Heart right ventricle (tissue), 16 donors: ENCODE measurements at regions of chr13 and their contacts with region 1.

Region 1: DNA sequence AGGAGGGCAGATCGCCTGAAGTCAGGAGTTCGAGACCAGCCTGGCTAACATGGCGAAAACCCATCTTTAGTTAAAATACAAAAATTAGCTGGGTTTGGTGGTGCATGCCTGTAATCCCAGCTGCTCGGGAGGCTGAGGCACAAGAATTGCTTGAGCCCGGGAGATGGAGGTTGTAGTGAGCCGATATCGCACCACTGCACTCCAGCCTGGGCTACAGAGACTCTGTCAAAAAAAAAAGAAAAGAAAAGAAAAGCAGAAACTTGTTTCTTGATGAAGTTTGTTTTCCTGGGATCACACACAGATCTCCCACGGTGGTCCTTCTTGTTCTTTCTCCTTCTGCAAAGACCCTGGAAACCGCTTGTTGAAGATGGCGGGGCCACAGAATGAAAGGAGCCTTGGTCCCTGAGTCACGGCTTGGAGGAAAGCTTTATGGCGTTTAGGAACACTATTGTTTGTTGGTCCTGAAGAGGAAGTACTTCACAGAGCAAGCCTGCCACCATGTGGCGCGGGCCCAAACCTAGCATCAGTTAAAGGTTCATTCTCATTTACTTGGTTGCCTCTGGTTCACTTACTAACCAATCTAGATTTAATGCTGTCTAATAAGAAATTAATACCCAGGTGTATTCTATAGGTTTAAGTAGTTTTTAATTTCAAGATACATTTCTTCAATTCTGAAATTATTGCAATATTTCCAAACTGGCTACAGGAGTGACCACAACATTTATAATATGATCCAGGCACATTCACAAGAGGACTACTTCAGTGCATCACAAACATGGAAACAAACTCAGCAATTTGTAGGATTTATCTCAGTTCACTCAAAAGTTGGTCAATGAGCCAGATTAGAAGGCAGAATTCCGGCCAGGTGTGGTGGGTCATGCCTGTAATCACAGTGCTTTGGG is 21.3 kb upstream of the ARL11 start:
- DNase-seq: peak; percentile 85 to 88
- ATAC-seq: peak; percentile 93 to 99 (median 97)
- H3K4me3 ChIP-seq: peak overlapping the region in 8 of 10 donors; percentile 18 to 52 (median 42)
- H3K27ac ChIP-seq: peak overlapping the region in 5 of 10 donors; percentile 34 to 53 (median 45)
- H3K4me1 ChIP-seq: peaks cover 0 to 18% (median 0%) of the 10 kb centered on the region in 9 donors
- H3K27me3 ChIP-seq: no peaks in the 10 kb centered on the region
- CTCF ChIP-seq: peak; percentile 68 to 93 (median 84)

Region 2: GRCh38 chr13:49530457-49530856 is 76.5 kb before region 1 on chr13:
- intact Hi-C with region 1: loop called in 1 of 10 experiments (anchors 10 kb)
- DNase-seq: no peak
- ATAC-seq: peak in 2 of 8 donors; percentile 22 to 29
- H3K4me3 ChIP-seq: no peak overlapping the region
- H3K27ac ChIP-seq: peak overlapping the region in 2 of 10 donors; percentile 4 to 29
- H3K4me1 ChIP-seq: peaks cover 0 to 14% (median 8%) of the 10 kb centered on the region in 9 donors
- H3K27me3 ChIP-seq: no peaks in the 10 kb centered on the region
- CTCF ChIP-seq: no peak

Region 3: GRCh38 chr13:49667773-49668172 is 60.8 kb after region 1 on chr13:
- intact Hi-C with region 1: no loop called
- DNase-seq: no peak
- ATAC-seq: peak in 1 of 8 donors; percentile 44
- H3K4me3 ChIP-seq: no peak overlapping the region
- H3K27ac ChIP-seq: no peak overlapping the region
- H3K4me1 ChIP-seq: peaks cover 0 to 14% (median 0%) of the 10 kb centered on the region in 9 donors
- H3K27me3 ChIP-seq: no peaks in the 10 kb centered on the region
- CTCF ChIP-seq: no peak